ENCODE measurements at regions of chr6 and their contacts with region 1.

Region 1: GRCh38 chr6:152948150-152948768 is 34.6 kb downstream of the FBXO5 start:
- DNase-seq: peak in 2 of 35 experiments; percentile 5 to 55
- ATAC-seq: peak; percentile 48 to 69 (median 54)
- H3K4me3 ChIP-seq: no peak overlapping the region
- H3K4me3 Mint-ChIP-seq: peak overlapping the region in 1 of 3 donors; percentile 22
- H3K27ac ChIP-seq: no peak overlapping the region
- H3K27ac Mint-ChIP-seq: no peak overlapping the region
- H3K4me1 ChIP-seq: peaks cover 2% of the 10 kb centered on the region in 2 experiments
- H3K4me1 Mint-ChIP-seq: peaks cover 10% of the 10 kb centered on the region in 3 donors
- H3K27me3 ChIP-seq: peaks cover 2 to 5% of the 10 kb centered on the region in 2 experiments
- H3K27me3 Mint-ChIP-seq: peaks cover 22 to 25% of the 10 kb centered on the region in 2 donors

Region 2: GRCh38 chr6:152905551-152906299 is 42.5 kb before region 1 on chr6:
- CTCF ChIA-PET with region 1: no interaction called
- POLR2A ChIA-PET with region 1: no interaction called
- DNase-seq: no peak
- ATAC-seq: no peak
- H3K4me3 ChIP-seq: no peak overlapping the region
- H3K4me3 Mint-ChIP-seq: no peak overlapping the region
- H3K27ac ChIP-seq: no peak overlapping the region
- H3K27ac Mint-ChIP-seq: no peak overlapping the region
- H3K4me1 ChIP-seq: no peaks in the 10 kb centered on the region
- H3K4me1 Mint-ChIP-seq: no peaks in the 10 kb centered on the region
- H3K27me3 ChIP-seq: no peaks in the 10 kb centered on the region
- H3K27me3 Mint-ChIP-seq: peaks cover 13 to 18% of the 10 kb centered on the region in 2 donors

Region 3: DNA sequence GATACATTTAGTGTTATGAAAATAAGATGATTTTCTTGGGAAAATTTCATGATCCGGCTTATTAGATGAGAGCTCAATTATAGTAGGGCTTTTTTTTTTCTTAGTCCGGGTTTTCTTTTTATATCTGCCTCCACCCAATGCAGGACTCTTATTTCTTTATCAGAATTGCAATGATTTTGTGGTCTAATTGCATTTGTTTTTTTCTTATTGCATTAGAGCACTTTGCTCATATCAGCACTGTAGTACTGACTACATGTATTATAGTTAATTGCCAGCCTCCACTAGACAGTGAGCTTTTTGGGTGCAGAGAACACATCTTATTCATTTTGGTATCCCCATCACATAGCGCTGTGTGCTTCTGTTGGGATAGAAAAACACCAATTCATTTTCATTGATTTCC is 15.4 kb before region 1 on chr6:
- CTCF ChIA-PET with region 1: interaction called, 7 to 18 read pairs
- POLR2A ChIA-PET with region 1: no interaction called
- DNase-seq: no peak
- ATAC-seq: no peak
- H3K4me3 ChIP-seq: no peak overlapping the region
- H3K4me3 Mint-ChIP-seq: no peak overlapping the region
- H3K27ac ChIP-seq: no peak overlapping the region
- H3K27ac Mint-ChIP-seq: no peak overlapping the region
- H3K4me1 ChIP-seq: no peaks in the 10 kb centered on the region
- H3K4me1 Mint-ChIP-seq: no peaks in the 10 kb centered on the region
- H3K27me3 ChIP-seq: no peaks in the 10 kb centered on the region
- H3K27me3 Mint-ChIP-seq: peaks cover 13 to 23% of the 10 kb centered on the region in 2 donors

Region 4: GRCh38 chr6:152973916-152974315 is 25.7 kb after region 1 on chr6:
- CTCF ChIA-PET with region 1: interaction called in 1 of 2 experiments, 5 read pairs
- POLR2A ChIA-PET with region 1: interaction called, 3 to 11 read pairs
- DNase-seq: no peak
- ATAC-seq: no peak
- H3K4me3 ChIP-seq: no peak overlapping the region
- H3K4me3 Mint-ChIP-seq: no peak overlapping the region
- H3K27ac ChIP-seq: no peak overlapping the region
- H3K27ac Mint-ChIP-seq: no peak overlapping the region
- H3K4me1 ChIP-seq: peaks cover 0 to 3% of the 10 kb centered on the region in 2 experiments
- H3K4me1 Mint-ChIP-seq: peaks cover 24 to 36% (median 29%) of the 10 kb centered on the region in 3 donors
- H3K27me3 ChIP-seq: no peaks in the 10 kb centered on the region
- H3K27me3 Mint-ChIP-seq: no peaks in the 10 kb centered on the region

Region 5: DNA sequence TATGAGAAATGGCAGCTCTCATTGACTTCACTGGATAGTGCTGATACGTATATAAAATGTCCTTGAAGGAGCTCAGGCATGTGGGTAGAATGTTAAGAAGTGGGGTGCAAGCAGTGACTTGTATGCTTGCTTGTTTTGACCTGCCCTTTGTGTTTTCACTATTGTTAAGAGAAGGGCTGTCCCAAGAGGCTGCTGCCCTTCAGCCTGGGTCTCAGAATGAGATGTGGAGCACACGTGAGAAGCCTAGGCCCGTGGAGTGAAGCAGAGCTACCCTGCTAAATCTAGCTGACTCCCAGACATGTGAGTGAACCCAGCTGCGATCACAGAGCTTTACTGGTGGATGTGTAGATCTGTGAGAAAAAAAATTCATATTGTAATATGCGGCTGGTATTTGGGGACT is 488.1 kb after region 1 on chr6:
- CTCF ChIA-PET with region 1: no interaction called
- POLR2A ChIA-PET with region 1: no interaction called
- DNase-seq: no peak
- ATAC-seq: no peak
- H3K4me3 ChIP-seq: no peak overlapping the region
- H3K4me3 Mint-ChIP-seq: no peak overlapping the region
- H3K27ac ChIP-seq: no peak overlapping the region
- H3K27ac Mint-ChIP-seq: no peak overlapping the region
- H3K4me1 ChIP-seq: no peaks in the 10 kb centered on the region
- H3K4me1 Mint-ChIP-seq: no peaks in the 10 kb centered on the region
- H3K27me3 ChIP-seq: no peaks in the 10 kb centered on the region
- H3K27me3 Mint-ChIP-seq: no peaks in the 10 kb centered on the region

Region 6: DNA sequence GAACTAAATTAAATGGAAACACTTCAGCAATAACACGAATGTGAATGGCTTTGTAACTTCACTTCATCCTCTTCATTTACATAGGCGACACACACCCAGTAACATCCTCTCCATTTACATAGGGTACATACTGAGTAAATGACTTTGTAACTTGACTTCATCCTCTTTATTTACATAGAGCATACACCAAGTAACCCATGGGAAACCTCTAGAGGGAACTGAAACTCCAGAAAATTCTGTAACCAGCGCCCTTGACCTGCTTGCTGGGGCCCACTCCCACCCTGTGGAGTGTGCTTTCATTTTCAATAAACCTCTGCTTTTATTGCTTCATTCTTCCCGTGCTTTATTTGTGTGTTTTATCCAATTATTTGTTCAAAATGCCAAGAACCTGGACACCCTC is 1009.1 kb after region 1 on chr6:
- CTCF ChIA-PET with region 1: no interaction called
- POLR2A ChIA-PET with region 1: no interaction called
- DNase-seq: no peak
- ATAC-seq: no peak
- H3K4me3 ChIP-seq: no peak overlapping the region
- H3K4me3 Mint-ChIP-seq: no peak overlapping the region
- H3K27ac ChIP-seq: no peak overlapping the region
- H3K27ac Mint-ChIP-seq: no peak overlapping the region
- H3K4me1 ChIP-seq: no peaks in the 10 kb centered on the region
- H3K4me1 Mint-ChIP-seq: peaks cover 0 to under 1% (median 0%) of the 10 kb centered on the region in 3 donors
- H3K27me3 ChIP-seq: no peaks in the 10 kb centered on the region
- H3K27me3 Mint-ChIP-seq: no peaks in the 10 kb centered on the region

Region 7: DNA sequence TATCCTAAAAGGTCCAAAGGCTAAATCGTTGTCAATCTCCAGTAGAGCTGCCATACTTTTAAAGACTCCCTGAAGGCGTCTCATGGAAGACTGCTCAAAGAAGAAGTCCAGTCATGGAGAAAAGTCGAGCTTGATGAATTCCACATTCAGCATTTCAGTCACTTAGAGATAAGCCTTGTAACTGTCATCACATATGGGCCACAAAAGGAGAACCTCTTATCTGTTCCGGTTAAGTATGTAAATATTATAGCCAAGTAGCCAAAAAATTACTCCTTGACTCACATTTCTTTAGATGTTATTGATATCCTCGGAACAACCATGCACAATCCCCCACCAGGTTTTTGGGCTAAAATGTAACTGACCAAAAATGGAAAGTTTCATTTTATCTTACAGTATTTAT is 1572.0 kb after region 1 on chr6:
- CTCF ChIA-PET with region 1: no interaction called
- POLR2A ChIA-PET with region 1: no interaction called
- DNase-seq: no peak
- ATAC-seq: no peak
- H3K4me3 ChIP-seq: no peak overlapping the region
- H3K4me3 Mint-ChIP-seq: no peak overlapping the region
- H3K27ac ChIP-seq: no peak overlapping the region
- H3K27ac Mint-ChIP-seq: no peak overlapping the region
- H3K4me1 ChIP-seq: no peaks in the 10 kb centered on the region
- H3K4me1 Mint-ChIP-seq: no peaks in the 10 kb centered on the region
- H3K27me3 ChIP-seq: peaks cover 0 to 4% of the 10 kb centered on the region in 2 experiments
- H3K27me3 Mint-ChIP-seq: peaks cover 3 to 7% of the 10 kb centered on the region in 2 donors

Measured in T-cell (primary cell).